ENCODE measurements at regions of chr1 and their contacts with region 1.

Region 1: GRCh38 chr1:209207701-209208286 is 375.7 kb upstream of the CAMK1G start:
- ATAC-seq: peak; percentile 92 to 98 (median 96)
- H3K4me3 ChIP-seq: peak overlapping the region; percentile 11 to 32 (median 31)
- H3K27ac ChIP-seq: peak overlapping the region in 1 of 2 donors; percentile 4
- H3K4me1 ChIP-seq: peaks cover 18 to 49% of the 10 kb centered on the region in 2 donors

Region 2: DNA sequence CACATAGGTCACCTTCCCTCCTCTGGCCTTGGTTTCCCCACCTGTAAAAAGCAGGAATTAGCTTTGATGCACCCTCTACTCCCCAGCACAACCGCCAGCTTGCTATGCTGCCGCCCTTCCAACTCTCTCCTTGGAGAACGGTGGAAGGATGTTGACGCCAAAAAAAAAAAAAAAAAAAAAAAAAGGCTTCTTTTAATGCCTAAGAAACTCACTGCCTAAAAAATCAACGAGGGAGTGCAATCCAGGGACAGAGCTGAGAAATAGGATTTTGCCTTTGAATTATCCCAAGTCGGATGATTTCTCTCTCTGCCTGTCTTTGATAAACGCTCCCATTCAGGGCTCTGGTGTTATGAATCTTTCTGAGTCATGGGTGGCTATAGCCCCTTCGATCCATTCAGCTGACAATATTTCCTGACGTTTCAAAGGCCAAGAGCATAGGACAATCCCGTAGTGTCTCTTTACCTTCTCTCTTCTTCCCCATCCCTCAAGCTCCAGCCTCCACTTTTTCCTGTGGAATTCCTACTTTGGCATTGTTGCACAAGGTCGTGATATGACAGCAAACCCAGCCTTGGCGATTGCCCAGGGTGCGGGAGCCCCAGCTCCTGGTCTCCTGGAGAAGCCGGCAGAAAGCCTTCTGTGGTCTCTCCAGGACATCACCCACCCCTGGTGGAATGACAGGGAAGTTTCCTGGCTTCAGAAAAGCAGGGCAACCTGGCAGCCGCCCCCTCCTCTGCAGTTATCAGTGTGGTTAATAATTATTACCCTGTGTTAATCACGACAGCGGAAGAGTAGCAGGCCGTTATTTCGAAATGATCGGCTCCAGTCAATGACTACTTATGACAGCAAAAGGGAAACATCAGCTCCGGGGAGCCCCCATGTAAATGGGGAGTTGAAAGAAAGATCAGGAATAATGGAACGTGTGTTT is 955.6 kb before region 1 on chr1:
- in situ Hi-C with region 1: loop called in 3 of 9 experiments (anchors 25 kb)
- ATAC-seq: peak in 5 of 8 experiments; percentile 53 to 80 (median 67)
- H3K4me3 ChIP-seq: no peak overlapping the region
- H3K27ac ChIP-seq: no peak overlapping the region
- H3K4me1 ChIP-seq: peaks cover 51 to 64% of the 10 kb centered on the region in 2 donors

Region 3: GRCh38 chr1:209565759-209566678 is 358.2 kb after region 1 on chr1:
- in situ Hi-C with region 1: loop called in 1 of 9 experiments (anchors 25 kb)
- ATAC-seq: peak; percentile 83 to 98 (median 94)
- H3K4me3 ChIP-seq: no peak overlapping the region
- H3K27ac ChIP-seq: no peak overlapping the region
- H3K4me1 ChIP-seq: peaks cover 8 to 19% of the 10 kb centered on the region in 2 donors